Left cardiac atrium (tissue), 4 donors: ENCODE measurements at regions of chr9 and their contacts with region 1.

Region 1: GRCh38 chr9:34701769-34702736 is 7.9 kb downstream of the CCL21 start:
- DNase-seq: peak; percentile 85
- ATAC-seq: peak; percentile 93 to 96

Region 2: GRCh38 chr9:34665381-34666250 is 36.4 kb before region 1 on chr9:
- intact Hi-C with region 1: loop called in 1 of 2 experiments (anchors 5 kb)
- DNase-seq: peak; percentile 95
- ATAC-seq: peak; percentile 90 to 92